Activated CD4-positive, alpha-beta T cell treated with anti-CD3 and anti-CD28 coated beads for 36 hours (primary cell): ENCODE measurements at regions of chr21 and their contacts with region 1.

Region 1: DNA sequence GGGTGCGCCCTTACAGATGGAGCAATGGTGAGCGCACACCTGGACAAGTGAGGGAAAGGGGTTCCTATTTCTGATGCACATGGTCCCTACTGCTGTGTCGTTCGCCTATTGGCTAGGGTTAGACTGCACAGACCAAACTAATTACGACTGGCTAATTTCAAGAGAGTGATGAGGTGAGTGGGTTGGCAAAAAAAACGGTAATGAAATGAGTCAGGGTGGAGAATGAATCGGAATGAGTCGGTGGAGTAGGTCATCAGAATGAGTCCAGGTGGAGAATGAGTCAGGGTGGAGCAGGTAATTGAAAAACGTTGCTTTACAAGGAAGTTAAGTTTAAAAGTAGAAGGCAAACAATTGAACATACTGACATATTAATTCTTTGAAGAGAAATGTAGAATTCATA is 79.8 kb downstream of the WDR4 start:
- DNase-seq: peak; percentile 56
- ATAC-seq: peak; percentile 95
- H3K4me3 Mint-ChIP-seq: no peak overlapping the region
- H3K27ac Mint-ChIP-seq: no peak overlapping the region
- H3K4me1 Mint-ChIP-seq: peaks cover 14% of the 10 kb centered on the region
- H3K27me3 Mint-ChIP-seq: no peaks in the 10 kb centered on the region

Region 2: DNA sequence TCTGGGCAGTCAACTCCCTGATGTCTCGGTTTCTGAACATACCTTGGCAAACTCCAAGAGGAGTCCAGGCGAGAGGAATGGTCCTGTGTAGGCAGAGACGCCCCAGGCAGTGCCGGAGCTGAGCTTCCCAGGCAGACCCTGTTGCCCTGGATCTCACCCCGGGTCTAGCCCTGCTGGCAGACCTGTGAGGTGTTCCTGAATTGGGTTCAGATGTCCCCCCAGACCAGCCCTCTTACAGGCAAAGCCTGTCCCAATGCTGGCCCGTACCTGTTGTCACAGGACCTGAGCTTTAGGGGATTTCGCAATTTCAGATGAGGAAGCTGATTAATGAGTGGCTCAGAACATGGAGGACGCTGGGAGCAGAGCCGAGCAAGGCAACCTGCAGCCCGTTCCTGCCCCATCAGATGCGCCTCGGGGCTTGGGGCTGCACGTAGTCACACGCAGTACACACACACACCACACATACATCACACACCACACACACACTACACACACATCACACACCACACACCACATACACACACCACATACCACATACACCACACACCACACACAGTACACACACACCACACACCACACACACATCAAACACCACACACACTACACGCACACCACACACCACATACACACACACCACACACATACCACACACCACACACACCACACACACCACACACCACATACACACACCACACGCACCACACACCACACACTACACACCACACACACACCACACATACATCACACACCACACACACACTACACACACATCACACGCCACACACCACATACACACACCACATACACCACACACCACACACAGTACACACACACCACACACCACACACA is 184.5 kb before region 1 on chr21:
- CTCF ChIA-PET with region 1: no interaction called
- POLR2A ChIA-PET with region 1: no interaction called
- intact Hi-C with region 1: loop called in 1 of 2 experiments (anchors 2 kb)
- DNase-seq: peak; percentile 84
- ATAC-seq: peak; percentile 88
- H3K4me3 Mint-ChIP-seq: no peak overlapping the region
- H3K27ac Mint-ChIP-seq: no peak overlapping the region
- H3K4me1 Mint-ChIP-seq: peaks cover 7% of the 10 kb centered on the region
- H3K27me3 Mint-ChIP-seq: no peaks in the 10 kb centered on the region

Region 3: GRCh38 chr21:42695697-42696380 is 103.7 kb before region 1 on chr21:
- CTCF ChIA-PET with region 1: no interaction called
- POLR2A ChIA-PET with region 1: no interaction called
- intact Hi-C with region 1: no loop called
- DNase-seq: no peak
- ATAC-seq: no peak
- H3K4me3 Mint-ChIP-seq: no peak overlapping the region
- H3K27ac Mint-ChIP-seq: no peak overlapping the region
- H3K4me1 Mint-ChIP-seq: no peaks in the 10 kb centered on the region
- H3K27me3 Mint-ChIP-seq: no peaks in the 10 kb centered on the region

Region 4: GRCh38 chr21:42827588-42827987 is 28.1 kb after region 1 on chr21:
- CTCF ChIA-PET with region 1: no interaction called
- POLR2A ChIA-PET with region 1: no interaction called
- intact Hi-C with region 1: no loop called
- DNase-seq: no peak
- ATAC-seq: no peak
- H3K4me3 Mint-ChIP-seq: no peak overlapping the region
- H3K27ac Mint-ChIP-seq: no peak overlapping the region
- H3K4me1 Mint-ChIP-seq: peaks cover 19% of the 10 kb centered on the region
- H3K27me3 Mint-ChIP-seq: peaks cover 18% of the 10 kb centered on the region